ENCODE measurements at regions of chr6 and their contacts with region 1.

Region 1: GRCh38 chr6:27772261-27773001 is 139.8 kb downstream of the OR2B2 start:
- DNase-seq: peak; percentile 92
- H3K4me3 Mint-ChIP-seq: no peak overlapping the region
- H3K27ac Mint-ChIP-seq: no peak overlapping the region
- H3K4me1 Mint-ChIP-seq: peaks cover 17% of the 10 kb centered on the region
- H3K27me3 Mint-ChIP-seq: peaks cover 37% of the 10 kb centered on the region

Region 2: DNA sequence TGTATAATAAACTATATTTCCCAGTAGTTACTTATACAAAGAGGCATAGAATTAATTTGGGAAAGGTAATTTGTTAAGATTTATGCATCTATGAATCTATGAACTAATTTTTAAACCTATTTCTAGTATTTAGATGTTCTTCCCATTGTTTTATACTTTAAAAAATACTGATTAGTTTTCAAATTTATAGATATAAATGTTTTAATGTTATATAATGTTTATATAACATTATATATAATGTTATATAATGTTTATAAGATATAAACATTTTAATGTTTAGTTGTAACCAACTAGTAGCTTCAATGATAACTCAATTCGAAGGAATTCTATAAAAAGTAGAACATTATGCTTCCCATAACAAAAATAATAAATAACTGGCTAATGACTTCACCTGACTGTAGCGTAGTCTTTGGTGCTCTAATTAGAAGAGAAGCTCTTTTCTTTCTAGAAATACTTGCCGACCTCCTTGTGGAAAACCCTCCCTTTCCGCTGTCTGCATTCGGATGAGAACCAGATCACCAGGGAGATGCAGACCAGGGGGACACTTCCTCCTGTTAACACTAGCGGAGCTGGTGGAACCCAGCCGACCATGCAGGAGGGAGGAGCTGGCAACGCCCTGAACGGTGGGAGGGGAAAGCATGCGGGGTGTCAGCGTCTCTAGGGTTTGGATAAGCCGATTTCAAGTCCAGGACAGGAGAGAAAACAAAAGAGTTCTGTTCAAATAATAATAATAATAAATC is 18.6 kb before region 1 on chr6:
- CTCF ChIA-PET with region 1: interaction called, 15 read pairs
- DNase-seq: peak; percentile 81
- H3K4me3 Mint-ChIP-seq: peak overlapping the region; percentile 96
- H3K27ac Mint-ChIP-seq: peak overlapping the region; percentile 88
- H3K4me1 Mint-ChIP-seq: peaks cover 46% of the 10 kb centered on the region
- H3K27me3 Mint-ChIP-seq: peaks cover 12% of the 10 kb centered on the region

Region 3: GRCh38 chr6:27760464-27760863 is 12.0 kb before region 1 on chr6:
- CTCF ChIA-PET with region 1: interaction called, 15 read pairs
- DNase-seq: no peak
- H3K4me3 Mint-ChIP-seq: no peak overlapping the region
- H3K27ac Mint-ChIP-seq: no peak overlapping the region
- H3K4me1 Mint-ChIP-seq: peaks cover 32% of the 10 kb centered on the region
- H3K27me3 Mint-ChIP-seq: peaks cover 8% of the 10 kb centered on the region

Region 4: GRCh38 chr6:27782748-27783147 is 10.3 kb after region 1 on chr6:
- CTCF ChIA-PET with region 1: interaction called, 18 read pairs
- DNase-seq: no peak
- H3K4me3 Mint-ChIP-seq: no peak overlapping the region
- H3K27ac Mint-ChIP-seq: no peak overlapping the region
- H3K4me1 Mint-ChIP-seq: no peaks in the 10 kb centered on the region
- H3K27me3 Mint-ChIP-seq: peaks cover 33% of the 10 kb centered on the region

Region 5: GRCh38 chr6:27795697-27796494 is 23.5 kb after region 1 on chr6:
- CTCF ChIA-PET with region 1: interaction called, 53 read pairs
- DNase-seq: peak; percentile 54
- H3K4me3 Mint-ChIP-seq: no peak overlapping the region
- H3K27ac Mint-ChIP-seq: peak overlapping the region; percentile 25
- H3K4me1 Mint-ChIP-seq: peaks cover 42% of the 10 kb centered on the region
- H3K27me3 Mint-ChIP-seq: peaks cover 12% of the 10 kb centered on the region